Panc1 (cell line): ENCODE measurements at regions of chr19 and their contacts with region 1.

Region 1: DNA sequence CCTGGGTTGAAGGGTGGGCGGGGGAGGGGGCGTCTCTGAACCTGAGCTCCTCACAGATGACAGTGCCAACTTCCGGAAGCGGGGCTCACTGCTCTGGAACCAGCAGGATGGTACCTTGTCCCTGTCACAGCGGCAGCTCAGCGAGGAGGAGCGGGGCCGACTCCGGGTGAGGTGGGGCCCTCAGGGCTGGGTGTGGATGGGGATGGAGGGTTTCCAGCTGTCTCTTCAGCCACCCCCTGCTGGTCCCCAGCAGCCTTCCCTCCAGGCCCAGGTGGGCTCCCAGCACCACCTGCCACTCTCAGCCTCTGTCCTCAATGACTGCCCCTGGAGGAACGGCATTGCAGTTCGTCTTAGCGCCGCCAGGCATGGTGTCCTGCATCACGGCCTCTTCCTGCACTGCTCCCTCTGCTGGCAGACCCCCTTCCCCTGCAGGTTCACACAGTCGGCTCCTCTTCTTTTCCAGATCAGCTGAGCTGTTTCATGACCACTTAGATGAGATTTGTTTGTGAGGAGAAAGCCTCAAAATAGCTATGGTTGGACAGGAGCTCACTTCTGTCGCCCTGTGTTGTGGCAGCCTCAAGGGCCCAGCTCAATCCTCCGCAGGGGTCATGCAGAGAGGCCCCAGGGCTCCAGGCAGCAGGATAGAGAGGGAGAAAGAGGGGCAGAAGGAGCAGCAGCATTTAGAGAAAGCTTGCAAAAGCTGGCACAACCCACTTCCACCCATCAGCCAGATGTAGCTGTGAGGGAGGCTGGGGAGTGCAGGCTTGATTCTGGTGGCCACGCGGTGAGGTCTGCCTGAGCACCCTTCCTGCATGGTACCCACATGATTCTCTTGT is 2.5 kb upstream of the GARIN5A start:
- DNase-seq: no peak
- ATAC-seq: peak; percentile 79
- H3K4me3 ChIP-seq: no peak overlapping the region
- H3K27ac ChIP-seq: no peak overlapping the region
- H3K4me1 ChIP-seq: no peaks in the 10 kb centered on the region
- H3K27me3 ChIP-seq: no peaks in the 10 kb centered on the region
- CTCF ChIP-seq: peak; percentile 89

Region 2: DNA sequence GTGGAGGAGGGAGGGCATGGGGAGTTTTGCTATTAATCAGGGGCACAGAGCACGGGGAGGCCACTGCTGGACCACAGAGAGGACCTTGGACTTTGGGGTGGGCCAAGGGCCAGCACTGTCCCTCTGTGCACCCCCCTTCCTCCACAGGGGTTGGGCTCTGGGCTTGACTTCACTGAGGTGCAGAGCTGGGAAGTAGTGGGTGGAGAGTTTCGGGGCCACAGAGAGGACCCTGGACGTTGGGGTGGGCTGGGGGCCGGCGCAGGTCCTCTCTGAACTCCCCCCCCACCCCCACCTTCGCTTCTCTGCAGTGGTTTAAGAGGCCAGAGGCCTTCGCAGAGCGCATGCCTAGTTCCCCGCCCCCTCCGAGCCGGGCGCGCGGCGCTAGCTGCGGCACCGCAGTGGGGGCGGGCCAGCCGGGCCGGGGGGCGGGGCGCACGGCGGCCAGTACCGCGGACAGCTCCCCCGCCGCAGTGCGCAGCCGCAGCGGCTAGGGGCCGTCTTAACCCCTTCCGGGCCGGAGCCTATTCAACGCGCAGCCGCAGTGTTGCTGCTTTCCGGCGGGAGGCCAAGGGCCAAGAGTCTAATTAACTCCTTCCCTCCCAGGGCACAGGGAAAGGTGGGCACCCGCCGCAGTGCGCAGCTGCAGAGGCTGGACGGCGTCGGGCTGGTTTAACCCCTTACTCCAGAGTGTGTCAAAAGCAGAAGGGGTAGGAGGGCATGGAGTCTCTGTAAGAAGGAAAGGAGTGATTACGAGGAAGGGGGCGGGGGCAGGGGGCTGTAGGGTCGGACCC is 153.6 kb before region 1 on chr19:
- CTCF ChIA-PET with region 1: no interaction called
- POLR2A ChIA-PET with region 1: no interaction called
- in situ Hi-C with region 1: no loop called
- intact Hi-C with region 1: no loop called
- DNase-seq: no peak
- ATAC-seq: peak; percentile 32
- H3K4me3 ChIP-seq: peak overlapping the region; percentile 5 to 14; a peak in 2 of 4 replicates
- H3K27ac ChIP-seq: no peak overlapping the region
- H3K4me1 ChIP-seq: peaks cover 3% of the 10 kb centered on the region
- H3K27me3 ChIP-seq: no peaks in the 10 kb centered on the region
- CTCF ChIP-seq: no peak

Region 3: GRCh38 chr19:50406829-50407512 is 72.1 kb before region 1 on chr19:
- CTCF ChIA-PET with region 1: interaction called, 10 read pairs
- POLR2A ChIA-PET with region 1: no interaction called
- in situ Hi-C with region 1: no loop called
- intact Hi-C with region 1: no loop called
- DNase-seq: no peak
- ATAC-seq: no peak
- H3K4me3 ChIP-seq: no peak overlapping the region
- H3K27ac ChIP-seq: no peak overlapping the region
- H3K4me1 ChIP-seq: no peaks in the 10 kb centered on the region
- H3K27me3 ChIP-seq: no peaks in the 10 kb centered on the region
- CTCF ChIP-seq: no peak

Region 4: GRCh38 chr19:50449236-50449899 is 29.8 kb before region 1 on chr19:
- CTCF ChIA-PET with region 1: no interaction called
- POLR2A ChIA-PET with region 1: no interaction called
- in situ Hi-C with region 1: no loop called
- intact Hi-C with region 1: no loop called
- DNase-seq: no peak
- ATAC-seq: no peak
- H3K4me3 ChIP-seq: no peak overlapping the region
- H3K27ac ChIP-seq: no peak overlapping the region
- H3K4me1 ChIP-seq: no peaks in the 10 kb centered on the region
- H3K27me3 ChIP-seq: no peaks in the 10 kb centered on the region
- CTCF ChIP-seq: no peak